ENCODE measurements at regions of chr20 and their contacts with region 1.

Region 1: DNA sequence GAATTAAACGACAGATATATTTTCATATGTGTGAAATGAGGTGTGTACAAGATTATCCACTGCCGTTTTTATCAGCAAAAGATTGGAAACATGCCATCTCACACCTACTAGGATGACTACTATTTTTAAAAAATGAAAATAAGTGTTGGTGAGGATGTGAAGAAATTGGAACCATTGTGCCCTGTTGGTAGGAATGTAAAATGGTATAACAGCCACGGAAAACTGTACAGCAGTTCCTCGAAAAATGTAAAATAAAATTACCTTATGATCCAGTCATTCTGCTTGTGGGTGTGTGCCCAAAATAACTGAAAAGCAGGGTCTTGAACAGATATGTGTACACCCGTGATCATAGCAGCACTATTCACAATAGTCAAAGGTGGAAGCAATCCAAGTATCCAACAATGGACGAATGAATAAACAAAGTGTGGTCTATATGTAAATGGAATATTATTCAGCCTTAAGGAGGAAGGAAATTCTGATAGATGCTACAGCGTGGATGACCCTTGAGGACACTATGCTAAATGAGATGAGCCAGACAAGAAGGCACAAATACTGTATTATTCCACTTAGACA is 27.0 kb upstream of the CCN5 start:
- DNase-seq: no peak
- H3K4me3 ChIP-seq: no peak overlapping the region
- H3K27ac ChIP-seq: no peak overlapping the region
- H3K4me1 ChIP-seq: peaks cover 7 to 39% (median 18%) of the 10 kb centered on the region in 4 donors
- H3K27me3 ChIP-seq: no peaks in the 10 kb centered on the region
- CTCF ChIP-seq: no peak
- EP300 ChIP-seq: no peak
- POLR2A ChIP-seq: no peak

Region 2: DNA sequence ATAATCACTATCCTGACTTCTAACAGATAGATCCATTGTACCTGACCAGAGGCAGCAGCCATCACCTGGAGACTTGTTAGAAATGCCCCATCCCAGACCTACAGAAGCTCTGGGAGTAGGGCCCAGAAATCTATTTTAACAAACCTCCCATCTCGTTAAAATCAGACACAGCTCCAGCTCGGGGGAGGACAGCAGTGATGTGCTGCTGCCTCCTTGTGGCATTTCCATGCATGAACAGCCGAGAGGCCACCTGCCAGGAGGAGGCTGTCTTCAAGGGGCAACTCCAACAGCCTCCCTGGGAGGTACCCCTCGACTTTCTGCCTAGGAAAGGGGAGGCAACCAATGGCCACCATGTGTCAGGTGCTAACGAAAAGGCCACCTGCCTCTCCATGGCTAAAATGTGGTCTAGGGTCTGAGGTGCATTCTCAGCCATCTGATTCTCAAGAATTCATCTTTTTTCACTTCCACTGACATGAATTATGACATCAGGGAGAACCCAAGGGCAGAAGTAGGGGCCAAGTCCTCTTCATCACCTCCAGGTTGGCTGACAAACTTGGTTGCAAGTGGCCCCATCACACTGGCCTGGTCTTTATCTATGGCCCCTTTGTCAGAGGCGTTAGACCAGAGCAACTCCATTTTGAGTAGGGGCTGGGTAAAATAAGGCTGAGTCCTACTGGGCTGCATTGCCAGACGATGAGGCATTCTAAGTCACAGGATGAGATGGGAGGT is 45.4 kb after region 1 on chr20:
- intact Hi-C with region 1: loop called (anchors 5 kb)
- DNase-seq: peak; percentile 81 to 88
- H3K4me3 ChIP-seq: no peak overlapping the region
- H3K27ac ChIP-seq: peak overlapping the region in 1 of 5 donors; percentile 41
- H3K4me1 ChIP-seq: peaks cover 17 to 41% (median 38%) of the 10 kb centered on the region in 4 donors
- H3K27me3 ChIP-seq: peaks cover 0 to 4% (median 0%) of the 10 kb centered on the region in 3 donors
- CTCF ChIP-seq: peak in 5 of 7 experiments; percentile 78 to 95 (median 87)
- EP300 ChIP-seq: no peak
- POLR2A ChIP-seq: no peak

Region 3: GRCh38 chr20:44866703-44867335 is 178.7 kb after region 1 on chr20:
- intact Hi-C with region 1: loop called (anchors 5 kb)
- DNase-seq: no peak
- H3K4me3 ChIP-seq: peak overlapping the region in 1 of 4 donors; percentile 38
- H3K27ac ChIP-seq: no peak overlapping the region
- H3K4me1 ChIP-seq: peaks cover 14 to 37% (median 26%) of the 10 kb centered on the region in 4 donors
- H3K27me3 ChIP-seq: peaks cover 0 to 3% (median 0%) of the 10 kb centered on the region in 3 donors
- CTCF ChIP-seq: no peak
- EP300 ChIP-seq: no peak
- POLR2A ChIP-seq: no peak

Measured in stomach (tissue), 19 donors.